ENCODE measurements at regions of chr9 and their contacts with region 1.

Region 1: GRCh38 chr9:116524778-116525470 is 162.2 kb upstream of the TRIM32 start:
- DNase-seq: no peak
- H3K4me3 ChIP-seq: no peak overlapping the region
- H3K27ac ChIP-seq: no peak overlapping the region
- H3K4me1 ChIP-seq: no peaks in the 10 kb centered on the region
- H3K27me3 ChIP-seq: no peaks in the 10 kb centered on the region
- CTCF ChIP-seq: no peak

Region 2: GRCh38 chr9:116247791-116248374 is 277.0 kb before region 1 on chr9:
- intact Hi-C with region 1: no loop called
- DNase-seq: no peak
- H3K4me3 ChIP-seq: no peak overlapping the region
- H3K27ac ChIP-seq: no peak overlapping the region
- H3K4me1 ChIP-seq: no peaks in the 10 kb centered on the region
- H3K27me3 ChIP-seq: no peaks in the 10 kb centered on the region
- CTCF ChIP-seq: no peak

Region 3: DNA sequence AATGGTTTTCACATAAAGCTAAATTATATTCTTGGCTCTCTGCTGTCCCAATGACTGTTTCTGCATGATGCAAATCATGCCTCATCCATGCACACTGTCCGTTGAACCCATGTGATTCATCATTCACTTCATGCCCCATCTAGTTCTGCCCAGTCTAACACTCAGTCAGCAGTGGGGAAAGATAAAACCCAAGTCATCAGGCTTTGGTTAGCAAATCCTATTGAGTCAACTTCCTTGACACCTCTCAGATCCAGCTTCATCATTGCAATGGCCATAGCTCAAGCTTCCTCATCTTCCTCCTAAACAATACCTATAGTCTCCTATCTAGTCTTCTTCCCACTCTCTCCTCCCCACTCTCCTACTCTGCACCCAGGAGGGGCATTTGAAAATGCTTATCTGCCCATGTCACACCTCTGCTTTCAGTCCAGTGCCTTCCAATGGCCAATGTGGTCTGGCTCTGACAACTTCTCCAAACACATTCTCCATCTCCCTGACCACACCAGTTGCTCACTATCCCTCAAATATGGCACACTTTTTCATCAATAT is 103.9 kb before region 1 on chr9:
- intact Hi-C with region 1: no loop called
- DNase-seq: no peak
- H3K4me3 ChIP-seq: no peak overlapping the region
- H3K27ac ChIP-seq: no peak overlapping the region
- H3K4me1 ChIP-seq: no peaks in the 10 kb centered on the region
- H3K27me3 ChIP-seq: no peaks in the 10 kb centered on the region
- CTCF ChIP-seq: no peak

Region 4: DNA sequence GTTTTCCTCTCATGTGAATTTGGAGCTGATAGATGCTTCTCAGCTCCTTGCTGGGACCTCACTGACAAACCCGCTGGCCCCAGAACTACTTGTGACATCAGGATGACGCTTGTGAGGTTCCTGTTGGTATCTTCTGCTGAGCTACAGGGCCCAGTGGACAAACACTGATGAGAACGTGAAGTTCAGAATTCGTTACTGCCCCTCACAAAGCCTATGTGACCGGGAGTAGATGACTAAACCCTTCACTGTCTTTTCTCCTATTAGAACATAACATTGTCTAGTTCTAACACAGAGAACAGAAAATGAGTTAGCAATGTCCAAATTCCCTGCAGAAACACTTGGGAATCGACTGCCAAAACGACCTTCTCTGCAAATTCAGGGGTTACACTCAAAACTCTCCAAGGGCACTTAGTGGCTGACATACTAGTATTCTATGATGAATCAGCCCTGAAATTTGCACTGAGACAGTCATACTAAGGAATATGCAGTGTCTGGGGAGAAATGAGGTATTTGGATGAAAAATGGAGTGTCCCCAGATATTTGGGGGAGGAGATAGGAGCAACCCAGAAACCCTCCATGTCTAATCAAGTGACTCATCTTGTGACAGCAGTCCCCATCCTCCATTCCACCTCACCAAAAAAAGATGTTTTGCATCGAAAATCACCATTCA is 18.9 kb after region 1 on chr9:
- intact Hi-C with region 1: loop called (anchors 2 kb)
- DNase-seq: no peak
- H3K4me3 ChIP-seq: no peak overlapping the region
- H3K27ac ChIP-seq: no peak overlapping the region
- H3K4me1 ChIP-seq: no peaks in the 10 kb centered on the region
- H3K27me3 ChIP-seq: no peaks in the 10 kb centered on the region
- CTCF ChIP-seq: no peak

Region 5: DNA sequence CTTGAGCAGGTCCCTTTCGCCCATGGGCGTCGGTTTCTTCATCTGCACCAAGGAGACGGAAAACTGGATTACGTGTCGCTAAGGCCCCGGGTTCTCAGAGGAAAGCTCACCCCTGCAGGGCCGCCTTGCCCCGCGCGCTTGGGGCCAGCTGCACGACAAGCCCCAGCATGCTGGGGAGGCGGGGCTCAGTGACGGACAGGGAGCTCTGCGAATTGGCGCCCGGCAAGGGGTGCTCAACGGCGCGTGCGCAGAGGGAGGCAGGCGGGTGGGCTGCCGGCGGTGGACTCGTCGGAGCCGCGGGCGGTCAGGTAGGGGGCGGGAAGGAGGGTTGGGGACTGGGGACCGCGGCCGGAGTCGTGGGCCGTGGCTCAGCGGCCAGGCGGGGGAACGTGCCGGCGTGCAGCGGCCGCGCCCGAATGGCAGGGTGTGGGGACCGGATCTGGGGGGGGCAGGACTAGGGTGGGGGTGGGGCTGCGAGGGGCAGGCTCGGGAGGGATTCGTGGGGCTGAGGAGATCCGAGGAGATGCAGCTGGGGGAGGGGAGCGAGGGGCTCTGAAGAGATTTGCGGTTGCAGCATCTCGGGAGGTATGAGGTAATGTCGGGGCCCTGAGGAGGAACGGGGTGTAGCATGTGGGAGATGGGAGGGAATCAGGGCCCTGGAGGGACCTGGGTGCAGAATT is 162.3 kb after region 1 on chr9 and contains the start of gene TRIM32:
- intact Hi-C with region 1: no loop called
- DNase-seq: peak; percentile 95
- H3K4me3 ChIP-seq: peak within 1 kb of the TSS; percentile 66
- H3K27ac ChIP-seq: peak within 1 kb of the TSS; percentile 22
- H3K4me1 ChIP-seq: peaks cover 12% of the 10 kb centered on the region
- H3K27me3 ChIP-seq: no peaks in the 10 kb centered on the region
- CTCF ChIP-seq: no peak
- total RNA-seq, gene TRIM32: 17.1 to 17.2 TPM

Measured in colonic mucosa (tissue), 4 donors.